ENCODE measurements at regions of chr4 and their contacts with region 1.

Region 1: DNA sequence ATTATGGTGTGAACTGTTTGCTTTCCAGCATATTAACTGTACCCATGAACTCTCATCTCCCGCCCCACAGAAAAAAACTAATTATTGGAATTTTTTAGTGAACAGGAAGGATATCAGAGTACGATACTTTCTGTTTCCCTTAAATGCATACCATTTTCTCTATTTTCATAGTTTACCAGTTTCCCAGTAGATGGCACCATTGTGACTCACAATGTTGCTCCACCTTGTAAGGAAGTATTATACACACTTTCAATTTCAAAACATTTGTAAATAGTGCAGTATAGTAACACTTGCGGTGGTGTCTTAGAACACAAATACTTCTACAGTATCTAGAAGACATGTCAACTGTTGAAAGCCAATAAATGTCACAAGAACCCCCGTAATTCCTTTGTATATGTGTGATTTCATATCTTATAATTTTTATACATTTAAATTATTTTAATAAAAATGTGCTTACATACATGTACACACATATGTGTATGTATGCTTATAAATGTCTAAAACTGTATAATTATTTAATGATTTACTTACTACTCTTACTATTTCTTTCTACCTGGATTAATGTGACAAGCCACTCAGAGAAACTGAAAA is 167.3 kb downstream of the SLIT2 start:
- DNase-seq: no peak
- H3K4me3 Mint-ChIP-seq: peak overlapping the region; percentile 57
- H3K27ac Mint-ChIP-seq: peak overlapping the region; percentile 9
- H3K4me1 Mint-ChIP-seq: peaks cover 5% of the 10 kb centered on the region
- H3K27me3 Mint-ChIP-seq: no peaks in the 10 kb centered on the region

Region 2: GRCh38 chr4:20512033-20512792 is 93.3 kb after region 1 on chr4:
- intact Hi-C with region 1: no loop called
- DNase-seq: no peak
- H3K4me3 Mint-ChIP-seq: no peak overlapping the region
- H3K27ac Mint-ChIP-seq: no peak overlapping the region
- H3K4me1 Mint-ChIP-seq: no peaks in the 10 kb centered on the region
- H3K27me3 Mint-ChIP-seq: no peaks in the 10 kb centered on the region

Region 3: GRCh38 chr4:20543131-20543530 is 124.2 kb after region 1 on chr4:
- intact Hi-C with region 1: loop called (anchors 2 kb)
- DNase-seq: no peak
- H3K4me3 Mint-ChIP-seq: no peak overlapping the region
- H3K27ac Mint-ChIP-seq: no peak overlapping the region
- H3K4me1 Mint-ChIP-seq: no peaks in the 10 kb centered on the region
- H3K27me3 Mint-ChIP-seq: no peaks in the 10 kb centered on the region

Region 4: DNA sequence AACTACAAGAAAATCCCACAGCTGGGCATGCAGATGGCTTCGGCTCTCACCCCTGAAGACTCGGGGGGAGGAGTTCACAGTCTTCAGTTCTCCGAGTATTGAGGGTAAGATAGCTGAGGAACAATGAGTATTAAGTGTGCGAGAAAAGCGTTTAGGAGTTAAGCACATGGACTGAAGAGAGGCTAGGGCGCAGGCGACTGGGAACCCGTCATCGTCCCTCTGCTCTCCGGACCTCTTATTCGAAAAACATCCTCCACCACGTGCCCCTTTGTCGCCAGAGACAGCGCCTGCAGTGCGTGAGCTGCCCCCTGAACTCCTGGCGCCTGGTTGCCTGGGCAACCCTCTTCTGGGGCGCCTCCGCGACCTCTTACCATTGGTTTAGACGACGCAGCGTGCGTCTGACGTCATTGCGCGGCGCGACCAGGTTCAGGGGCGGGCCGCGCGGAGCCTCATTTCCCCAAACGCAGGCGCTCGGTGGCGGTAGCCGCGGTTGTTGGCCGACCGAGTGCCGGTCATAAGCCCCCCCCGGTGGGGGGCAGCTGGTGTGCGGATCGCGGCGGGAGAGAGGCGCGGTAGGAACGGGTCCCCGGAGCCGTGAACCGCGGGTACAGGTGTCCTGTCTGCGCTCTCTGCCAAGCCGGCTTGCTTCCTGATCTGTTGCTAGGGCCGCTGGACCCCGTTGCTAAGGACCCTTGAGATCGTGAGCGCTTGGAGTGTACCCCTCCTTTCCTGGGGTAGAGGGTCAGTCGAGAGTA is 281.2 kb after region 1 on chr4 and contains the start of gene PACRGL:
- intact Hi-C with region 1: loop called (anchors 1 kb)
- DNase-seq: peak; percentile 87
- H3K4me3 Mint-ChIP-seq: peak within 1 kb of the TSS; percentile 94
- H3K27ac Mint-ChIP-seq: peak within 1 kb of the TSS; percentile 92
- H3K4me1 Mint-ChIP-seq: peaks cover 31% of the 10 kb centered on the region
- H3K27me3 Mint-ChIP-seq: no peaks in the 10 kb centered on the region
- total RNA-seq, gene PACRGL: 17.2 and 17.6 TPM in 2 replicates

Region 5: DNA sequence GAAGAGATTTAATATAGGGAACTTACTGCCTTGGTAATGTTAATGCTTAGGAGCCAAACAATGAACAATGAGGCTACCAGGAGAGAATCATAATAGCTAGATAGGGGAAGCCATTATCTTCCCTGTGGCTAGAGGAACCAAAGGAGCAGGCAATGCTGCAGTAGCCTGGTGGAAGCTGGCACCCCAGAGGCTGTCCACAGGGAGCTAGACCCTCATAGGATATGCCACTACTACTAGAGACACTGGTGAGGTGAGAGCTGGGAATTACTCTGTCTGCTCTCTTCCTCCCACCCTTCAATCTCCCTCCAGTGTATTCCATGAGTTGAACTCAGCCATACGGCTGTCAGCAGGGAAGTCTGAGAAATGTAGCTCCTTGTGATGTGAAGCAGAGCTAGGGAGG is 928.2 kb after region 1 on chr4:
- intact Hi-C with region 1: no loop called
- DNase-seq: no peak
- H3K4me3 Mint-ChIP-seq: no peak overlapping the region
- H3K27ac Mint-ChIP-seq: no peak overlapping the region
- H3K4me1 Mint-ChIP-seq: no peaks in the 10 kb centered on the region
- H3K27me3 Mint-ChIP-seq: no peaks in the 10 kb centered on the region

Measured in activated T-helper 1 cell treated with anti-CD3 and anti-CD28 coated beads, Interleukin-12 subunit alpha, Interleukin-12 subunit beta, Interleukin-2, Interleukin-4 antibody, amounts not matched to agents 30 ng/mL and 10 ng/mL and 1 ng/mL, durations not matched to agents 14 hours and 24 hours and 36 hours (primary cell).